ENCODE measurements at regions of chr1 and their contacts with region 1.

Region 1: GRCh38 chr1:160085686-160086455 is 4.5 kb downstream of the KCNJ9 start:
- DNase-seq: peak; percentile 79
- H3K4me3 Mint-ChIP-seq: no peak overlapping the region
- H3K27ac Mint-ChIP-seq: no peak overlapping the region
- H3K4me1 Mint-ChIP-seq: peaks cover 14% of the 10 kb centered on the region
- H3K27me3 Mint-ChIP-seq: peaks cover 20% of the 10 kb centered on the region

Region 2: DNA sequence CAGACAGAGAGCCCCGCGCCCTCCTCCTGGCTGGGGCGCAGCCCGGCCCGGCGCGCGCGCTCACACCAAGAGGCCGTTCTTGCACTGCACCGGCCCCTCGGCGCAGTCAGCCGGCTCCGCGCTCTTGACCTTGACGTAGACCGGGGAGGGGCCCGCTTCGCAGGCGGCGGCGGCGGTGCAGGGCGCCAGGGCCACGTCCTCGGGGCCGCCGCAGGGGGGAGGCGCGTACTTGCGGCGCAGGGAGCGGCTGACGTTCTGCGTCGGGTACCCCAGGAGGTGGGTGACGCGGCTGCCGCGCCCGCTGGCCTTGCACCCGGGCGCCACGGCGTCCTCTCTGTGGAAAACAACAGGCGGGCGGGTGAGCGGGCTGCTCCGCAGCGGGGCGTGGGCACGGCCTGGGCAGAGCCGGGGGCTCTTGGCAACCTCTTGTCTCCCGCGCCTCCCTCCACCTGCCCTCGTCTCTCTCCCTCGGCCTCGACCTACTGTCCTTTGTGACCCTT is 231.1 kb before region 1 on chr1:
- CTCF ChIA-PET with region 1: no interaction called
- POLR2A ChIA-PET with region 1: no interaction called
- DNase-seq: peak; percentile 73
- H3K4me3 Mint-ChIP-seq: peak overlapping the region; percentile 71
- H3K27ac Mint-ChIP-seq: peak overlapping the region; percentile 78
- H3K4me1 Mint-ChIP-seq: peaks cover 18% of the 10 kb centered on the region
- H3K27me3 Mint-ChIP-seq: peaks cover 4% of the 10 kb centered on the region

Region 3: GRCh38 chr1:160070243-160071163 is 15.4 kb before region 1 on chr1:
- CTCF ChIA-PET with region 1: interaction called, 32 read pairs
- POLR2A ChIA-PET with region 1: no interaction called
- DNase-seq: peak; percentile 61
- H3K4me3 Mint-ChIP-seq: peak overlapping the region; percentile 75
- H3K27ac Mint-ChIP-seq: no peak overlapping the region
- H3K4me1 Mint-ChIP-seq: peaks cover 18% of the 10 kb centered on the region
- H3K27me3 Mint-ChIP-seq: peaks cover 57% of the 10 kb centered on the region

Region 4: DNA sequence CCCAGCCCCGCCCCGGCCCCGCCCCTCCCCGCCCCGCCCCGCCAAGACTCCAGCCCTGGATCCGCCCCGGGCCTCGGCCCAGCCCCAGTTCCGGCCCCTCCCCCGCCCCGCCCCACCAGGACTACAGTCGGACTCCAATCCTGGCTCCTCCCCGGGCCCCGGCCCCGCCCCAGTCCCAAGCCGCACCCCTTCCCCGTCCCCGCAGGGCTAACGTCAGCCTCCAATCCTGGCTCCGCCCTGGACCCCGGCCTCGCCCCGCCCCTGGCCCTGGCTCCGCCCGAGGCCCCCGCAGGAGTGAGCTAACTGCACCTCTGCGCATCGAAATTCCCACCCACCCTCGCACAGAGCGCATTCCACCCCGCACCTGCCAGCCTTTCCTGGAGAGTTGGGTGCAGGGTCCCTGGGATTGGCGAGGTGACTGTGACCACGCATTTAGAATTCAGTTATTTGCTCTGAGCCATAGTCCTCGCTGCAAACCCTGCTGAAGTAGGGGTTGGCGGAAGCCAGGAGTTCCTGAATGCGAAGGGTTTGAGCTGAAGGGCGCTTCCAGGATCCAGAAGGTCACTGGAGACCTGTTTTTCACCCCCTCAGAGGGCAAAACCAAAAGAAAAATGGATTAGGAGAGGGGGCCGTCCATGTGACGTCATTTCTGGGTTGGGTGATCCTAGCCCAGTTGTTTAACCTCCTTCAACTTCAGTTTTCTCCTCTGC is 13.1 kb after region 1 on chr1:
- CTCF ChIA-PET with region 1: interaction called, 42 read pairs
- POLR2A ChIA-PET with region 1: no interaction called
- DNase-seq: peak; percentile 98
- H3K4me3 Mint-ChIP-seq: peak overlapping the region; percentile 77
- H3K27ac Mint-ChIP-seq: peak overlapping the region; percentile 94
- H3K4me1 Mint-ChIP-seq: peaks cover 49% of the 10 kb centered on the region
- H3K27me3 Mint-ChIP-seq: no peaks in the 10 kb centered on the region

Measured in activated CD4-positive, alpha-beta T cell treated with anti-CD3 and anti-CD28 coated beads, Interleukin-2, amount 10 ng/mL, durations not matched to agents 7 days and 5 days (primary cell).